ENCODE measurements at regions of chr12 and their contacts with region 1.

Region 1: DNA sequence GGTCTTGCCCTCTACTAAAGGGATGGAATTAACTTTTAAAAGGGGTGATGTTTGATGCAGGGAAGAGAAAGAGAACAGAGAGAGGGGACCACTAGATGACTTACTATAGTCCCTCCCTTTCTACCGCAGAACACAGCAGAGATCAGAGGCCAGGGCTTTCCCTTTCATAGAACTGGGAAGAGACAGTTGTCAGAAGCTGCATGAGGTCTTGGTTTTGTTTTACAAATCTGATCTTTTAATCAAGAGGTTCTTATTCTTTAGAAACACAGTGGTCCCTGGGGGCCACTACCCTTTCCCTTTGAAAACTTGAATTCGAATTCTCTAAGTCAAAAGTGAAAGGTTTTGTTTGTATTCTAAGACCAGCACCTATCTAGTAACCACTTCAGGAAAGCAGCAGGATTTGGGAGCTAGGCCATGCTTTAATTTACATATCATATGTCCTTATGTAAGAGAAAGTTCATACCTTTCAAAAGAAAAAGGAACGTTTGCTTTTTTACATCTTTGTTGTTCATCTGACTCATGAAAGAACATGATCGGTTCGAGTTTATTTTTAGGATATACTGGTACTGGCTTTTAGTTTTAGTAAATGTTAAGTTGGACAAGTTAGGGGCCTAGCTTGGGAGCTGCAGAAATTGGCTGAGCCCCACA is 6.3 kb downstream of the FBXL14 start:
- DNase-seq: peak; percentile 80 to 90
- H3K4me3 ChIP-seq: no peak overlapping the region
- H3K4me1 ChIP-seq: peaks cover 47% of the 10 kb centered on the region
- H3K27me3 ChIP-seq: no peaks in the 10 kb centered on the region

Region 2: DNA sequence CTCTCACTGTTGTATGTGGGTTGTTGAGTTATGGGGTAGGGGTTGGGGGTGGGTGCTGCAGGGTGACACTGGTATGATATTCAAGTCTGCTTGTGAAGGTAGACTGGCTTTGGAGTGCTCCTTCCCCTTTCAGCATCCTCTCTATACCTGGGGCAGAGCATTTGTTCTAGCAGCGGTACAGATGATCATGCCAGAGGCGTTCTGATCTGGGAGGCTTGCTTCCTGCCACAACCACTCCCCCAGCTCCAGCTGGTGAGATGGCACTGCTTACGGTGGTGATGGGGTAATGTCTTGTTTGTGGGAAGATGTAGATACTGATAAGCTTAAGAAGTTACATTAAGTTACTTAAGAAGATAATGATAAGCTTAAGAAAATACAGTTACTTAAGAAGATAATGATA is 465.3 kb before region 1 on chr12:
- in situ Hi-C with region 1: loop called (anchors 5 kb)
- DNase-seq: no peak
- H3K4me3 ChIP-seq: no peak overlapping the region
- H3K4me1 ChIP-seq: no peaks in the 10 kb centered on the region
- H3K27me3 ChIP-seq: no peaks in the 10 kb centered on the region

Measured in HAP-1 (cell line).